ENCODE measurements at regions of chr1 and their contacts with region 1.

Region 1: DNA sequence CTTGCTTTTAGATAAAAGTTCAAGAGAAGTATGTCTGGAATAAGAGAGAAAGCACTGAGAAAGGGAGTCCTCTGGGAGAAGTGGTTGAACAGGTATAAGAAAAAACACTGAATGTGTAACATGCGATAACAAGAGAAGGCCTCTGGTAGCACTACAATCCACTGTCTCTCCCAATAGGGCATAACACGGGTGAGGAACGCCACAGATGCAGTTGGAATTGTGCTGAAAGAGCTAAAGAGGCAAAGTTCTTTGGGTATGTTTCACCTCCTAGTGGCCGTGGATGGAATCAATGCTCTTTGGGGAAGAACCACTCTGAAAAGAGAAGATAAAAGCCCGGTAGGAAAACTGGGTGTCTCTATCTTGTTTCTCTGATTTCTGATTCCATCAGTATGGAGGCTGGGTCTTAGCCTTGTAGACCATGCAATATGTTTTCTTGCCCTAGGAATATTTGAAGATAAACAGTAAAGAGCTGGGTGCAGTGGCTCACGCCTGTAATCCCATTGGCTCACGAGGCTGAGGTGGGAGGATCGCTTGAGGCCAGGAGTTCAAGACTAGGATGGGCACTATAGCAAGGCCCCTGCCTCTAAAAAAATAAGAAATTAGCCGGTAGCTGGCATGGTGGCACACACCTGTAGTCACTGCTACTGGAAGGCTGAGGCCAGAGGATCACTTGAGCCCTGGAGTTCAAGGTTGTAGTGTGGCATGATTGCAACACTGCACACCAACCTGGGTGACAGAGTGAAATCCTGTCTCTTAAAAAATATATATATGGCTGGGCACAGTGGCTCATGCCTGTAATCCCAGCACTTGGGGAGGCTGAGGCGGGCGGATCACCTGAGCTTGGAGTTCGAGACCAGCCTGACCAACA is 40.4 kb downstream of the DAP3 start:
- DNase-seq: peak; percentile 85
- ATAC-seq: peak; percentile 98
- H3K4me3 ChIP-seq: no peak overlapping the region
- H3K27ac ChIP-seq: no peak overlapping the region
- H3K4me1 ChIP-seq: no peaks in the 10 kb centered on the region
- H3K27me3 ChIP-seq: no peaks in the 10 kb centered on the region
- CTCF ChIP-seq: peak; percentile 90

Region 2: GRCh38 chr1:155648551-155649147 is 80.6 kb before region 1 on chr1:
- CTCF ChIA-PET with region 1: interaction called, 3 read pairs
- POLR2A ChIA-PET with region 1: no interaction called
- intact Hi-C with region 1: loop called (anchors 10 kb)
- DNase-seq: peak; percentile 93
- ATAC-seq: peak; percentile 78
- H3K4me3 ChIP-seq: peak overlapping the region; percentile 62
- H3K27ac ChIP-seq: peak overlapping the region; percentile 77
- H3K4me1 ChIP-seq: peaks cover 33% of the 10 kb centered on the region
- H3K27me3 ChIP-seq: no peaks in the 10 kb centered on the region
- CTCF ChIP-seq: peak; percentile 80

Region 3: DNA sequence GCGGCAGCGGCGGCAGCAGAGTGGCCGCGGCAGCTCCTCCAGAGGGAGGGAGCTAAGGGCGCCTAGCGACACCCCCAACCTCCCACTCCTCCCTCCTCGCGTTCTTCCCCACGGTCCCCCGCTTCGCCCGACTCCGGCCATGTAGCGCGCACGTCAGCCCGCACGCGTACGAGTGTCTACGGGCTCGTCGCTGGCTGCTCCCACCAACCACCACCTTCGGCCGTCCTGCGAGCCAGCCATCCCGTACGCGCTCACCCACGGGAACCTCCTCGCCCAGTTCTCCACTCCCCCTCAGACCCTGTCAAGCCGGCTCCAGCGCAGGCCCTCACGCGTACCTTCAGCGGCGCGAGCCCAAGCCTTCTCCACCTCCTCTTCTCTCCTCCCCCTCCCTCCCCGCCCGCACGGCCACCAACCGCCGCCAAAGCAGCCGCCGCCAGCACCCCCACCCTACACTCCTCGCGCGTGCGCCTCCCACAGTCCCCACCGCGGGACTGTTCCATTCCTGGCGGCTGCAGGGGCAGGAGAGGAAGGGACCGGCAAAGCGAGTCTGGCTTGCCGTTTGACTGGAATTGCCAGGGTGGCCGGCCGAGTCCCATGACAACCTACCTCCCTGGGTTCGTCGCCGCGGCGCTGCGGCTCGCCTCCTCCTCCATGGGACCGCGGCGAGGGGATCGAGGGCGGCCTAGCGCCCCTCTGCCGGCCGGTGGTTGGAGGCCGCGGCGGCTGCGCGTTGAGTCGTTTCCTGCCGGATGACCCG is 40.8 kb before region 1 on chr1 and contains the start of gene YY1AP1:
- CTCF ChIA-PET with region 1: no interaction called
- POLR2A ChIA-PET with region 1: no interaction called
- intact Hi-C with region 1: loop called (anchors 2 kb)
- DNase-seq: peak; percentile 91
- ATAC-seq: peak; percentile 79
- H3K4me3 ChIP-seq: peak within 1 kb of the TSS; percentile 93
- H3K27ac ChIP-seq: peak within 1 kb of the TSS; percentile 90
- H3K4me1 ChIP-seq: peaks cover 13% of the 10 kb centered on the region
- H3K27me3 ChIP-seq: no peaks in the 10 kb centered on the region
- CTCF ChIP-seq: no peak
- total RNA-seq, gene YY1AP1: 37.6 TPM in 2 replicates

Region 4: GRCh38 chr1:155989242-155990004 is 260.2 kb after region 1 on chr1:
- CTCF ChIA-PET with region 1: no interaction called
- POLR2A ChIA-PET with region 1: no interaction called
- intact Hi-C with region 1: loop called (anchors 1 kb)
- DNase-seq: peak; percentile 88
- ATAC-seq: peak; percentile 91
- H3K4me3 ChIP-seq: no peak overlapping the region
- H3K27ac ChIP-seq: no peak overlapping the region
- H3K4me1 ChIP-seq: no peaks in the 10 kb centered on the region; the same call in 1 of the 2 replicates
- H3K27me3 ChIP-seq: no peaks in the 10 kb centered on the region
- CTCF ChIP-seq: peak; percentile 98

Measured in PC-3 (cell line).